Transverse colon (tissue), 4 donors: ENCODE measurements at regions of chr1 and their contacts with region 1.

Region 1: GRCh38 chr1:76905876-76906595 is 38.8 kb downstream of the ST6GALNAC5 start:
- DNase-seq: no peak
- H3K4me3 ChIP-seq: no peak overlapping the region
- H3K27ac ChIP-seq: no peak overlapping the region
- H3K4me1 ChIP-seq: no peaks in the 10 kb centered on the region
- H3K27me3 ChIP-seq: no peaks in the 10 kb centered on the region
- CTCF ChIP-seq: no peak
- EP300 ChIP-seq: no peak
- POLR2A ChIP-seq: no peak

Region 2: GRCh38 chr1:76955652-76956051 is 49.6 kb after region 1 on chr1:
- in situ Hi-C with region 1: no loop called
- intact Hi-C with region 1: loop called (anchors 2 kb)
- DNase-seq: no peak
- H3K4me3 ChIP-seq: no peak overlapping the region
- H3K27ac ChIP-seq: no peak overlapping the region
- H3K4me1 ChIP-seq: no peaks in the 10 kb centered on the region
- H3K27me3 ChIP-seq: no peaks in the 10 kb centered on the region
- CTCF ChIP-seq: no peak
- EP300 ChIP-seq: no peak
- POLR2A ChIP-seq: no peak